ENCODE measurements at regions of chr10 and their contacts with region 1.

Region 1: DNA sequence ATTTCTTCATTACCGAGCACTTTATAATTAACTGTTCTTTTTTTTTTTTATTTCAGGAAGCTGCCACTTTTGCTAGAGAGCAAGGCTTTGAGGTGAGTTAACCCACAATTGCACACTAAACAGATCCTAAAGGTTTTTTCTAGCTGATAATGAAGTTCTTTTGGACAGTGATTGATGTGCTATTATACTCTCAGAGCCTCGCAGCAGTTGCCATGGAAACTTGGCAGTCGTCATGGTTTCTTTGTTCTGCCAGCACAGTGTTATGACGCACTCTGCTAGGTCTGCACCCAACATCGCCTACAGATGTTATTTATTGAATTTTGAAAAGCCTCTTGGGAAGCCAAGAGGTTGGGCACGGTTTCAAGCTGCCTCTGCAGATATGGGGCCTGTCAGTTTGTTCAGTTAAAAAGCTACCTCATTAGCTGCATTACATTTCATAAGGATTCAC is 237.2 kb upstream of the KAT6B start:
- DNase-seq: peak; percentile 77
- H3K4me3 Mint-ChIP-seq: no peak overlapping the region
- H3K27ac Mint-ChIP-seq: peak overlapping the region; percentile 71
- H3K4me1 Mint-ChIP-seq: peaks cover 68% of the 10 kb centered on the region
- H3K27me3 Mint-ChIP-seq: no peaks in the 10 kb centered on the region

Region 2: GRCh38 chr10:74262856-74263255 is 326.4 kb before region 1 on chr10:
- intact Hi-C with region 1: loop called (anchors 2 kb)
- DNase-seq: no peak
- H3K4me3 Mint-ChIP-seq: no peak overlapping the region
- H3K27ac Mint-ChIP-seq: no peak overlapping the region
- H3K4me1 Mint-ChIP-seq: peaks cover 13% of the 10 kb centered on the region
- H3K27me3 Mint-ChIP-seq: no peaks in the 10 kb centered on the region

Region 3: DNA sequence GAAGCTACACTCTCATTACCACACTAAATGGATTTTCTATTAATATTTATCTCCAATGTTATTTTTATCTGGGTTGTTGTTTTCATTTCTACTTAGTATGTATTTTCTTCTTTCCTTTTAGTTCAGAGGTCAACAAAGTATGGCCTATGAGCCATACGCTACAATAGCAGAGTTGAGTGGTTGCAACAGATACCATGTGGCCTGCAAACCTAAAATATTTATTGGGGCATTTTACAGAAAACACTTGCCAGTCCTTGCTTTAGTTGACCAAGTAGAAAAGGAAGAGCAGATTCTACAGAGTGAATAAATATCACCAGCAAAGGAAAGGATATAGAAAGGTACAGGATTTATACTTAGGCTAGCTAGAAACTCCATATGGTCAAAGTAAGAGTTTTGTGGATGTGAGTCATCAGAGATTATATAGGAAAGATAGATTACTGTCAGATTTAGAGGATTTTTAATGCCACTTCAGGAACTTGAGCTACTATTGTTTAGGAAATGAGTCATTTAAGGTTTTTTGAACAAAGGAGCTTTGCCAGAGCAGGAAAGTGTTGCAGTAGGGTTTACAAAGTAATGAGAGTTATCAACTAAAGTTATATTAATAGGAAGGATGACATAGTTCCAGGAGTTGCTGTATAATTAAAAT is 86.2 kb before region 1 on chr10:
- intact Hi-C with region 1: loop called (anchors 1 kb)
- DNase-seq: no peak
- H3K4me3 Mint-ChIP-seq: no peak overlapping the region
- H3K27ac Mint-ChIP-seq: peak overlapping the region; percentile 44
- H3K4me1 Mint-ChIP-seq: peaks cover 42% of the 10 kb centered on the region
- H3K27me3 Mint-ChIP-seq: no peaks in the 10 kb centered on the region

Region 4: GRCh38 chr10:74542065-74542464 is 47.2 kb before region 1 on chr10:
- intact Hi-C with region 1: no loop called
- DNase-seq: no peak
- H3K4me3 Mint-ChIP-seq: no peak overlapping the region
- H3K27ac Mint-ChIP-seq: no peak overlapping the region
- H3K4me1 Mint-ChIP-seq: peaks cover 7% of the 10 kb centered on the region
- H3K27me3 Mint-ChIP-seq: no peaks in the 10 kb centered on the region

Region 5: DNA sequence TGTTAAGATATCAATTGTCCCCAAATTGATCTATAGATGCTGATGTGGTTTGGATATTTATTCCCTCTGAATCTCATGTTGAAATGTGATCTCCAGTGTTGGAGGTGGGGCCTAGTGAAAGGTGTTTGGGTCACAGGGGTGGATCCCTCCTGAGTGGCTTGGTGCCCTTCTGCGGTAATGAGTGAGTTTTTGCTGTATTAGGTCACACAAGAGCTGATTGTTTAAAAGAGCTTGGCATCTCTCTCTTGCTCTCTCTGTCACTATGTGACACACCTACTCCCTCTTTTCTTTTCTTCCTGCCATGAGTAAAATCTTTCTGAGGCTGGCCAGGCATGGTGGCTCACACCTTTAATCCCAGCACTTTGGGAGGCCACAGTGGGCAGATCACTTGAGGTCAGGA is 139.0 kb after region 1 on chr10:
- intact Hi-C with region 1: no loop called
- DNase-seq: no peak
- H3K4me3 Mint-ChIP-seq: no peak overlapping the region
- H3K27ac Mint-ChIP-seq: no peak overlapping the region
- H3K4me1 Mint-ChIP-seq: no peaks in the 10 kb centered on the region
- H3K27me3 Mint-ChIP-seq: peaks cover 5% of the 10 kb centered on the region

Region 6: DNA sequence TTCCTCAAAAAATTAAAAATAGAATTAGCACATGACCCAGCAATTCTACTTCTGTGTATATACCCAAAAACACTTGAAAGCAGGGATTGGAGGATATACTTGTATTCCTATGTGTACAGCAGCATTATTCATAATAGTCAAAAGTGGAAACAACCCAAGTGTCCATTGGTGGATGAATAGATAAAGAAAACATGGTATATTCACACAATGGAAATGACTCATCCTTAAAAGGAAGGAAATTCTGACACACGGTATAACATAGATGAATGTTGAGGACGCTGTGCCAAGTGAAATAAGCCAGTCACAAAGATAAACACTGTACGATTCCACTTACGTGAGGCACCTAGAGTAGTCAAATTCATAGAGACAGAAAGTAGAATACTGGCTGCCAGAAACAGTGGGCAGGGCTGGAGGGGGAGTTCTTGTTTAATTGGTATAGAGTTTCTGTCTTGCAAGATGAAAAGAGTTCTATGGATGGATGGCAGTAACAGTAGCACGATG is 210.5 kb after region 1 on chr10:
- intact Hi-C with region 1: loop called (anchors 2 kb)
- DNase-seq: peak; percentile 12
- H3K4me3 Mint-ChIP-seq: no peak overlapping the region
- H3K27ac Mint-ChIP-seq: peak overlapping the region; percentile 68
- H3K4me1 Mint-ChIP-seq: peaks cover 14% of the 10 kb centered on the region
- H3K27me3 Mint-ChIP-seq: peaks cover 2% of the 10 kb centered on the region

Region 7: DNA sequence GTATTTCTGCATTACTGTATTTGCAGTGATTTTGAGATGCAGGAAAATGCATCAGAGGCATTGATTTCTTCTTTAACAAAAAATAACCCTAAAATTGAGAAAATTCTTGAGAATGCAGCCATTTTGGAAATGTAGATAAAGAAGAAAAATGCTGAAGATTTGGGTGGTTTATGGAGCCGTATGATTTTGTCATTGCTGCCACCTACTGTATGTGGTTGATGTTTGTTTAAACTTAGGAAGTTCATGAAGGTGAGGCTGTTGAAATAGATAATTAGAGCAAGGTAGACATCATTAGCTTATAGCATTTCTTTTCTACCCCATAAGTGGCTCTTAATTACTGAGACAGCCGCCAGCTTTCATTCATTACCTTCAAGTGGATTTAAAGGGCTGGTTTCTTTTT is 430.1 kb after region 1 on chr10:
- intact Hi-C with region 1: loop called (anchors 5 kb)
- DNase-seq: no peak
- H3K4me3 Mint-ChIP-seq: no peak overlapping the region
- H3K27ac Mint-ChIP-seq: no peak overlapping the region
- H3K4me1 Mint-ChIP-seq: peaks cover 26% of the 10 kb centered on the region
- H3K27me3 Mint-ChIP-seq: no peaks in the 10 kb centered on the region